CD4-positive, alpha-beta T cell (primary cell): ENCODE measurements at regions of chr10 and their contacts with region 1.

Region 1: GRCh38 chr10:75235375-75236177 is at the start of gene COMTD1:
- DNase-seq: peak; percentile 87 to 96 (median 92)
- ATAC-seq: peak; percentile 64
- H3K4me3 ChIP-seq: peak within 1 kb of the TSS; percentile 80
- H3K4me3 Mint-ChIP-seq: peak within 1 kb of the TSS; percentile 88
- H3K27ac ChIP-seq: peak within 1 kb of the TSS; percentile 47 to 66
- H3K27ac Mint-ChIP-seq: peak within 1 kb of the TSS; percentile 90
- H3K4me1 ChIP-seq: peaks cover 28% of the 10 kb centered on the region
- H3K4me1 Mint-ChIP-seq: peaks cover 29% of the 10 kb centered on the region
- H3K27me3 ChIP-seq: no peaks in the 10 kb centered on the region
- H3K27me3 Mint-ChIP-seq: no peaks in the 10 kb centered on the region
- CTCF ChIP-seq: peak; percentile 100
- total RNA-seq, gene COMTD1: 9.5 to 10.5 TPM

Region 2: DNA sequence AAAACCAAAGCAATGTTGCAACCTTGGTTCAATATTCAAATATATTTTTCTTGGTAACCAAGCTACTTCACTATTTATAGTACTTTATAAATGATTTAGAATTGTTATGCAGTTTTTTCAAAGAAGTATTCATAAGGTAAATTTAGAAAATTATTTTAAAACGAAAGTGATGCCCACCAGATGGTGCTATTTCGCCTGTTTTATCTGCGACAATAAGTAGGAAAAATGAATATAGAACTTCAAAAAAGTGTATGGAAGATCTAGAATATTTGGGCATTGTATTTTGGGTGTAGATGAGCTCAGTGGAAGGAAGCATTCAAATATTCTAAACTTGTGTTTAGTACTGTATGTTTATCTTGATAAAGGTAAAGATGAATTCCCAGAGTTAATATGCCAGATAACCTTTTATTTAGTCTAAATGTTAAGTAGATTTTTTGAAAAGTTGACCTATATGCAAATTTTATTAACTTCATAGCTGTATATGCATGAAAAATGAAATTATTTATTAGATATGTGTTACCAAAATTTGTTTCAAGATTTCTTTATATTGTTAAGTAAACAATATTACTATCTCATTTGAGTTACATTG is 991.4 kb before region 1 on chr10:
- CTCF ChIA-PET with region 1: interaction called, 5 read pairs
- POLR2A ChIA-PET with region 1: interaction called, 3 read pairs
- intact Hi-C with region 1: loop called in 1 of 2 experiments (anchors 1 kb)
- DNase-seq: peak in 4 of 14 experiments; percentile 49 to 70 (median 60)
- ATAC-seq: no peak
- H3K4me3 ChIP-seq: no peak overlapping the region
- H3K4me3 Mint-ChIP-seq: no peak overlapping the region
- H3K27ac ChIP-seq: no peak overlapping the region
- H3K27ac Mint-ChIP-seq: no peak overlapping the region
- H3K4me1 ChIP-seq: no peaks in the 10 kb centered on the region
- H3K4me1 Mint-ChIP-seq: no peaks in the 10 kb centered on the region
- H3K27me3 ChIP-seq: no peaks in the 10 kb centered on the region
- H3K27me3 Mint-ChIP-seq: no peaks in the 10 kb centered on the region
- CTCF ChIP-seq: peak; percentile 87

Region 3: GRCh38 chr10:74589226-74589673 is 646.3 kb before region 1 on chr10:
- CTCF ChIA-PET with region 1: no interaction called
- POLR2A ChIA-PET with region 1: no interaction called
- intact Hi-C with region 1: loop called in 1 of 2 experiments (anchors 10 kb)
- DNase-seq: peak; percentile 77 to 97 (median 85)
- ATAC-seq: peak; percentile 77
- H3K4me3 ChIP-seq: no peak overlapping the region
- H3K4me3 Mint-ChIP-seq: peak overlapping the region; percentile 66
- H3K27ac ChIP-seq: peak overlapping the region; percentile 65 to 66
- H3K27ac Mint-ChIP-seq: peak overlapping the region; percentile 94
- H3K4me1 ChIP-seq: peaks cover 16% of the 10 kb centered on the region
- H3K4me1 Mint-ChIP-seq: peaks cover 64% of the 10 kb centered on the region
- H3K27me3 ChIP-seq: no peaks in the 10 kb centered on the region
- H3K27me3 Mint-ChIP-seq: no peaks in the 10 kb centered on the region
- CTCF ChIP-seq: no peak

Region 4: DNA sequence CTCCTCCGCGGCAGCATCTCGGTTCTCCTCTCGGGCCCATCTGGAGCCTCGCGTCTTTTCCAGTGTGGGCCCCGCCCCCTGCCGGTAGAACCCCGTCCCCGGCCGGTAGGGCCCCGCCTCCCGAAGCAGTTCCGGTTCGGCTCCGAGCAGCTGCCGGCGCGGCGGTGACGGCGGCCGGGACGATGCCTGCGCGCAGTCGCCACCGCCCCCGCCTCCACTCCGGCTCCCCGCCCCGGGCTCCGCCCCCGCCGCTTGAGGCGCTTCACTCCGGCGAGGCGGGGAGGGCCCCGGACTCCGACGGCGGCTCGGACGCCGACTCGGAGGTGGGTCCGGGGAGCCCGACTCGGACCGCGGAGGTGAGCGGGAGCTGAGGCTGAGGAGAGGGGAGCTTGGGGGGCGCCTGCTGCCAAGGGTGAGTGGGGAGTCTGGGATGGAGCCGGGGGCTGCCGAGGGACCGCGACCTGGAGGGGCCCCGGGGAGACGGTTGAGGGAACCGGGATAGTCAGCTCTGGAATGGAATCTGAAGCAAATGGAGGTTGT is 124.1 kb before region 1 on chr10 and contains the start of gene SAMD8:
- CTCF ChIA-PET with region 1: interaction called, 7 read pairs
- POLR2A ChIA-PET with region 1: interaction called, 14 read pairs
- intact Hi-C with region 1: loop called (anchors 1 to 5 kb)
- DNase-seq: peak; percentile 90 to 99 (median 94)
- ATAC-seq: peak; percentile 80
- H3K4me3 ChIP-seq: peak within 1 kb of the TSS; percentile 97
- H3K4me3 Mint-ChIP-seq: peak within 1 kb of the TSS; percentile 88
- H3K27ac ChIP-seq: peak within 1 kb of the TSS; percentile 92 to 95
- H3K27ac Mint-ChIP-seq: peak within 1 kb of the TSS; percentile 90
- H3K4me1 ChIP-seq: peaks cover 26% of the 10 kb centered on the region
- H3K4me1 Mint-ChIP-seq: peaks cover 62% of the 10 kb centered on the region
- H3K27me3 ChIP-seq: no peaks in the 10 kb centered on the region
- H3K27me3 Mint-ChIP-seq: no peaks in the 10 kb centered on the region
- CTCF ChIP-seq: no peak
- total RNA-seq, gene SAMD8: 34.1 to 37.4 TPM

Region 5: GRCh38 chr10:75203724-75204123 is 31.9 kb before region 1 on chr10:
- CTCF ChIA-PET with region 1: interaction called, 53 read pairs
- POLR2A ChIA-PET with region 1: interaction called, 208 read pairs
- intact Hi-C with region 1: no loop called
- DNase-seq: no peak
- ATAC-seq: no peak
- H3K4me3 ChIP-seq: no peak overlapping the region
- H3K4me3 Mint-ChIP-seq: no peak overlapping the region
- H3K27ac ChIP-seq: no peak overlapping the region
- H3K27ac Mint-ChIP-seq: peak overlapping the region; percentile 27
- H3K4me1 ChIP-seq: no peaks in the 10 kb centered on the region
- H3K4me1 Mint-ChIP-seq: no peaks in the 10 kb centered on the region
- H3K27me3 ChIP-seq: no peaks in the 10 kb centered on the region
- H3K27me3 Mint-ChIP-seq: no peaks in the 10 kb centered on the region
- CTCF ChIP-seq: no peak